Endothelial cell of umbilical vein (primary cell): ENCODE measurements at regions of chr7 and their contacts with region 1.

Region 1: GRCh38 chr7:2248984-2249694 is 7.1 kb downstream of the NUDT1 start:
- DNase-seq: peak; percentile 82
- H3K4me3 ChIP-seq: no peak overlapping the region
- H3K27ac ChIP-seq: peak overlapping the region; percentile 90
- H3K4me1 ChIP-seq: peaks cover 17% of the 10 kb centered on the region
- H3K27me3 ChIP-seq: no peaks in the 10 kb centered on the region
- CTCF ChIP-seq: no peak
- POLR2A ChIP-seq: peak; percentile 44

Region 2: GRCh38 chr7:2261611-2262010 is 12.5 kb after region 1 on chr7:
- CTCF ChIA-PET with region 1: interaction called, 10 read pairs
- POLR2A ChIA-PET with region 1: no interaction called
- dilution Hi-C with region 1: no loop called
- intact Hi-C with region 1: no loop called
- DNase-seq: no peak
- H3K4me3 ChIP-seq: no peak overlapping the region
- H3K27ac ChIP-seq: no peak overlapping the region
- H3K4me1 ChIP-seq: no peaks in the 10 kb centered on the region
- H3K27me3 ChIP-seq: no peaks in the 10 kb centered on the region
- CTCF ChIP-seq: no peak
- POLR2A ChIP-seq: no peak